WTC11 (cell line): ENCODE measurements at regions of chr7 and their contacts with region 1.

Region 1: DNA sequence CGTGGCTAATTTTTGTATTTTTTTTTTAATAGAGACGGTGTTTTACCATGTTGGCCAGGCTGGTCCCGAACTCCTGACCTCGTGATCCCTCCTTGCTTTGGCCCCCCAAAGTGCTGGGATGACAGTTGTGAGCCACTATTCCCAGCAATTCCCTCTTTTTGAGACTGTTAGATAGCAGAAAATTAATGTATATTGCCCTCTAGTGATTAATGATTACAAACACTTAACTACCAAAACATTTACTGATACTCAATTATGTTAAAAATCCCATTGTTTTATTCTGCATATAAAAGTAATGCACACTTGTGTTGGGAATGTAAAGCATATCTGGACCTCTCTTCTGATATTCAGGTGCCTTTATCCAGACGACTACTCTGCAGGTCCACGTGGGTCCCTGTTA is 41.2 kb upstream of the COBL start:
- DNase-seq: no peak
- ATAC-seq: no peak
- H3K4me3 Mint-ChIP-seq: no peak overlapping the region
- H3K27ac Mint-ChIP-seq: no peak overlapping the region
- H3K4me1 Mint-ChIP-seq: peaks cover 20% of the 10 kb centered on the region
- H3K27me3 Mint-ChIP-seq: no peaks in the 10 kb centered on the region; the same call in 1 of the 2 replicates
- CTCF ChIP-seq: no peak

Region 2: DNA sequence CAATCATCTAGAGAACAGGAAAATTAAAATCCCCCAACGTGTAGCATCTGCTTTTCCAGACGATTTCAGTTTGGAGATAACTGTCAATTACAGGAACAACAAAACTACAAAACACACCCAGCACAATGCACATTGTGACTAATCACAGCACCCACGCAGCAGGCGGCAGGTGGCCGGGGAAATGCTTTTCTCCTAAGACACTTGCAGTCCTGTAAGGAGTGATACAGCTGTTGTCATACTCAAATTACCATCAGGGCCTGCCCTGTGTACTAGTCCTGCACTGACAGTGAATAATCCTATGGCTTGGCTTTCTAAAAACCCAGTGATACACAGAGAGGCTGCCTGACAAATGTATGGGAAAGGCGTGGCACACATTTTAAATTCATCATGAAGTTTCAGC is 79.0 kb before region 1 on chr7:
- CTCF ChIA-PET with region 1: no interaction called
- POLR2A ChIA-PET with region 1: no interaction called
- DNase-seq: no peak
- ATAC-seq: no peak
- H3K4me3 Mint-ChIP-seq: no peak overlapping the region
- H3K27ac Mint-ChIP-seq: no peak overlapping the region
- H3K4me1 Mint-ChIP-seq: peaks cover 43% of the 10 kb centered on the region
- H3K27me3 Mint-ChIP-seq: no peaks in the 10 kb centered on the region
- CTCF ChIP-seq: no peak

Region 3: GRCh38 chr7:51344406-51345138 is 13.2 kb before region 1 on chr7:
- CTCF ChIA-PET with region 1: interaction called, 10 read pairs
- POLR2A ChIA-PET with region 1: no interaction called
- DNase-seq: no peak
- ATAC-seq: no peak
- H3K4me3 Mint-ChIP-seq: no peak overlapping the region
- H3K27ac Mint-ChIP-seq: no peak overlapping the region
- H3K4me1 Mint-ChIP-seq: peaks cover 13% of the 10 kb centered on the region
- H3K27me3 Mint-ChIP-seq: no peaks in the 10 kb centered on the region
- CTCF ChIP-seq: no peak